ENCODE measurements at regions of chr10 and their contacts with region 1.

Region 1: DNA sequence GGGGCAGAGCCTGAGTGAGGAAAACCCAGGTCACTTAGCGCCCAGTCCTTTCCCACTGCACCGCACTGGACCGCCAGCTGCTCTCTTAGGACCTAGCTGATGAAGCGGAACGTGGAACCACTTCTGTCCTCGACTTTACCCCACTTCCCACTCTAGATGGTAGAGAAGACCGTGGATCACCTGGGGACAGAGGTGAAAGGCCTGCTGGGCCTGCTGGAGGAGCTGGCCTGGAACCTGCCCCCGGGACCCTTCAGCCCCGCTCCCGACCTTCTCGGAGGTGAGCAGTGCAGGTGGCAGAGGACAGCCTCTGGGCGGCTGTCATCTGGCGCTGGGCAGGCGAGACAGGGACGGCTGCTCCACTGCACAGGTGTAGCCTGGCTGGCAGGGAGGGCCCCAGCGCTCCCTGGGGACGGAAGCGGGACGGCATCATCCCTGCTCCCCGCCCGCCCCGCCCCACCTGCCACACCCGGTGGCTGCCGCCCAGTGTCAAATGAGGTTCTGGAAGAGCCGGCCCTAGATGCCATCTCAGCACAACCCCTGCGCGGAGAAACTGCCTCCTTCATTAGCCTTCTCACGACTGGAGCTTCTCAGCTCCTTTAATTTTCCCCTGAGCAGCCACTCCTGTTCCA is 11.7 kb downstream of the PLAC9 start:
- DNase-seq: peak in 2 of 10 donors; percentile 21 to 44
- H3K4me3 ChIP-seq: peak overlapping the region in 50 of 59 donors; percentile 3 to 57 (median 36)
- H3K27ac ChIP-seq: peak overlapping the region in 10 of 59 donors; percentile 9 to 66 (median 45)
- H3K27me3 ChIP-seq: peaks cover 0 to 5% (median 0%) of the 10 kb centered on the region in 45 donors
- CTCF ChIP-seq: peak in 11 of 56 donors; percentile 1 to 55 (median 18)

Region 2: DNA sequence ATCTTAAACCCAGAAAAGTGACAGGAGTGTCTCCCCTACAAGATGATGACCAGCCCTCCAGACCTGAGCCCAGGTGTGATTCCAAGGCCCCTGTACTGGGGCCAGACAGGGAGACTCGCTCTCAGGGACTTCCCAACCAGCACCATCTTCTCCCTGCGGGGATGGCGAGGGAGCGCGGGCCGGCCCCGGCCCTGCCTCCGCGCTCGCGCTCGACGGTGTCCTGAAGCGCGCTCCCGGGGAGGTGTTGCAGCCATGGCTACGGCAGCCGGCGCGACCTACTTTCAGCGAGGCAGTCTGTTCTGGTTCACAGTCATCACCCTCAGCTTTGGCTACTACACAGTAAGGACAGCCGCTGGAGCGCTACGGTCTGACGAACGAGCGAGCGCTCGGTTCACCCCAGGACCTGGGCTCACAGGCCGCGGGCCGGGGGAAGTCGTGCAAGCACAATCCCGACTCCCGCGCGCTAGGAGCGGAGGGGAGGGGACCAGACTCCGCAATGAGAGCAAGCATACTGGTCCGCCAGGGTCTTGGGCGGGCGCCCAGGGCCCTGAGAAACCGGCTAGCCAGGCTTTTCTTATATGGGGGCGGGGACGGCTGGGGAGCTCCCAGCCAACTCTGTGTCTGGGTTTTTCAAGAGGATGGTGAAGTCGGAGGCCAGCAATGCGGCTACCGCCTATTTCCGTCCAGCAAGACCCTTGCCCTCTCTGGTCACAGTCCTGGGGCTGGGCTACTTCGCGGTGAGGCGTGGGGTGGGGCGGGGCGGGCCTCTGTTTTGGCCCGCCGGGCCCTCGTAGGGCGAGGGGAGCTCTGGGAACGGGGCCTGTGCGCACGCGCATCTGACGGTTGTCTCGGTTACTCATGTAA is 65.5 kb before region 1 on chr10 and contains the start of gene TMEM254:
- intact Hi-C with region 1: loop called in 1 of 2 experiments (anchors 5 kb)
- DNase-seq: peak; percentile 79 to 91 (median 88)
- H3K4me3 ChIP-seq: peak within 1 kb of the TSS; percentile 29 to 99 (median 91)
- H3K27ac ChIP-seq: peak within 1 kb of the TSS; percentile 85 to 100 (median 98)
- H3K27me3 ChIP-seq: no peaks in the 10 kb centered on the region
- CTCF ChIP-seq: peak in 12 of 56 donors; percentile 5 to 38 (median 13)
- total RNA-seq, gene TMEM254: 13.2 to 31.9 (median 22.3) TPM

Region 3: DNA sequence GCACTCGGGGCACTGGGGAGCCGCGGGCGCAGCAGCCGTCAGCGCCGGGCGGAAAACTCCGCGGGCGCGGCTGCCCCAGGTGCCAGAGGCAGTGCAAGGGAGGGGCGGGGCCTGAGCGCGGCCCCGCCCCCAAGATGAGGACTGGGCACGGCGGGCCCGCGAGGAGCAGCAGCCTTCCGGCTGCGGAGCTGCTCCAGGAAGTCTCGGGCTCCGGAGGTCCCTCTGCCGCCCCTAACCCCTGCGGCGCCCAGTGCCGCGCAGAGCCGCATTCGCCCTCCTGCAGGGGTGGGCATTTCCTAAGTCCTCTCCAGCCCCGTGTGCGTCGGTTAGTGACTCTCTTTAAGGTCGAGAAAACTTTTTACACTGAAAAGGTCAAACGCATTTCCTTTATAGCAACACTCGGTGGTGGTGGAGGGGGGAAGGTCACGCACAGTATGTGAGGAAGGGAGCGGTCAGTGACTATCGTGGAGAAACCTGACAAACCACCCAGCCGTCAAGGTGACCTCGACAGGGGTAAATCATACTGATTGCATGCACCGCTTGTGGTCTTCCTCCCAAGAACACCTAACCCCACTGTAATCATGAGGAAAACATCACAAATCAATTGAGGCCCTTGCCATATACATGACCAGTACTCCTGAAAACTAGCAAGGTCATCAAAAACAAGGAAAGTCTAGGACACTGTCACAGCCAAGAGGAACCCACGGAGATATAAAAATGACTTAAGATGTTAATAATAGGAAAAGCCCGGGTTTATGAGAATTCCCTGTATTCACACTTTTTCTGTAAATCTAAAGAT is 61.5 kb after region 1 on chr10 and contains the start of gene ANXA11:
- intact Hi-C with region 1: loop called in 1 of 2 experiments (anchors 5 kb)
- DNase-seq: peak in 6 of 10 donors; percentile 38 to 75 (median 62)
- H3K4me3 ChIP-seq: peak within 1 kb of the TSS; percentile 43 to 84 (median 73)
- H3K27ac ChIP-seq: peak within 1 kb of the TSS in 58 of 59 donors; percentile 55 to 96 (median 89)
- H3K27me3 ChIP-seq: peaks cover 0 to 33% (median 0%) of the 10 kb centered on the region in 45 donors
- CTCF ChIP-seq: peak in 1 of 56 donors; percentile 7
- total RNA-seq, gene ANXA11: 47.9 to 162 (median 105) TPM

Region 4: GRCh38 chr10:80211786-80212185 is 67.6 kb after region 1 on chr10:
- intact Hi-C with region 1: loop called in 1 of 2 experiments (anchors 5 kb)
- DNase-seq: no peak
- H3K4me3 ChIP-seq: no peak overlapping the region
- H3K27ac ChIP-seq: no peak overlapping the region
- H3K27me3 ChIP-seq: peaks cover 0 to 21% (median 0%) of the 10 kb centered on the region in 45 donors
- CTCF ChIP-seq: no peak

Measured in dorsolateral prefrontal cortex (tissue), 120 donors.